GM10248 (cell line): ENCODE measurements at regions of chr6 and their contacts with region 1.

Region 1: GRCh38 chr6:20350215-20350614 is 51.5 kb upstream of the E2F3 start:
- DNase-seq: no peak
- CTCF ChIP-seq: no peak

Region 2: DNA sequence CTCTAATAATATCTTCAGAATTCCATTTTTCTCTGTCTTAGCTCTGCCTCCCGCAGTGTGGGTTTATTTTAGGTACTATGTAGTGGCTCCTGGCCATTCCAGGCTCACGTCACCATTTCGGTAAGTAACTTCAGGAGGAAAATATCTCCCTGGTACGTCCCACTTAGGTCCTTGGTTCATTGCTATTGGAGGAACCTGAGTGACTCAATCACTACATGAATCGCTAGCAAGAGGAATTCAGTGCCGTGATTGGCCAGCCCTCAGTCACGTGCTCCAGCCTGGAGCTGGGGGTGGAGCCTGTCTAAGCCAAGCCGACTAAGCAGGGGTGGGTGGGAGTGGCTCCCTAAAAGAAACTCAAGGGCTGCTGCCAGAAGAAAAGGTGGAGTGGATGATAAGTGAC is 15.9 kb before region 1 on chr6:
- CTCF ChIA-PET with region 1: interaction called, 10 read pairs
- POLR2A ChIA-PET with region 1: no interaction called
- DNase-seq: no peak
- CTCF ChIP-seq: no peak